Activated CD4-positive, alpha-beta T cell treated with anti-CD3 and anti-CD28 coated beads, Interleukin-2, amount 10 ng/mL, durations not matched to agents 24 days and 14 days (primary cell): ENCODE measurements at regions of chr13 and their contacts with region 1.

Region 1: GRCh38 chr13:99356158-99357091 is 49.2 kb upstream of the GPR183 start:
- DNase-seq: peak; percentile 94
- H3K4me3 Mint-ChIP-seq: peak overlapping the region; percentile 83
- H3K27ac Mint-ChIP-seq: peak overlapping the region; percentile 99
- H3K4me1 Mint-ChIP-seq: peaks cover 92% of the 10 kb centered on the region
- H3K27me3 Mint-ChIP-seq: no peaks in the 10 kb centered on the region

Region 2: DNA sequence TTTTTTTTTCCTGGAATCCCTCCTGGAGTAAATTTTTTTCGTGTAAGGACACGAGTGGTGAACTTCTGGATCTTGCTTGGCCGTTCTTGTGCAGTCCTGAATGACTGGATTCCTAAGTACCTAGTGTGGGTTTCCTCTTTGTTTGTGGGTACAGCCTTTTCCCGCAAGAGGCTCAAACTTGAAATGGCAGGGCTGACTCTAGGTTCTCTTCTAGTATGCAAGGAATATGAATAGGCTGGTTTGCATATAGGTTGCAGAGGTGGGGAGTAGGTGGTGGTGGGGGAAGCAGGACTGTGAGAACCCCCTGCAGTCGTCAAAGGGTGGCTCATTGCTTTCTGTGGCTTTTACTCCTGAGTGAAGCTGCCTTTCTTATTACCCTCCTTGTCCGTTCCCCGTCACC is 142.2 kb before region 1 on chr13:
- intact Hi-C with region 1: loop called (anchors 2 kb)
- DNase-seq: peak; percentile 78
- H3K4me3 Mint-ChIP-seq: peak overlapping the region; percentile 83
- H3K27ac Mint-ChIP-seq: peak overlapping the region; percentile 92
- H3K4me1 Mint-ChIP-seq: peaks cover 68% of the 10 kb centered on the region
- H3K27me3 Mint-ChIP-seq: no peaks in the 10 kb centered on the region

Region 3: GRCh38 chr13:99307648-99308339 is 48.6 kb before region 1 on chr13:
- intact Hi-C with region 1: loop called (anchors 1 kb)
- DNase-seq: peak; percentile 87
- H3K4me3 Mint-ChIP-seq: peak overlapping the region; percentile 84
- H3K27ac Mint-ChIP-seq: peak overlapping the region; percentile 88
- H3K4me1 Mint-ChIP-seq: peaks cover 73% of the 10 kb centered on the region
- H3K27me3 Mint-ChIP-seq: no peaks in the 10 kb centered on the region

Region 4: DNA sequence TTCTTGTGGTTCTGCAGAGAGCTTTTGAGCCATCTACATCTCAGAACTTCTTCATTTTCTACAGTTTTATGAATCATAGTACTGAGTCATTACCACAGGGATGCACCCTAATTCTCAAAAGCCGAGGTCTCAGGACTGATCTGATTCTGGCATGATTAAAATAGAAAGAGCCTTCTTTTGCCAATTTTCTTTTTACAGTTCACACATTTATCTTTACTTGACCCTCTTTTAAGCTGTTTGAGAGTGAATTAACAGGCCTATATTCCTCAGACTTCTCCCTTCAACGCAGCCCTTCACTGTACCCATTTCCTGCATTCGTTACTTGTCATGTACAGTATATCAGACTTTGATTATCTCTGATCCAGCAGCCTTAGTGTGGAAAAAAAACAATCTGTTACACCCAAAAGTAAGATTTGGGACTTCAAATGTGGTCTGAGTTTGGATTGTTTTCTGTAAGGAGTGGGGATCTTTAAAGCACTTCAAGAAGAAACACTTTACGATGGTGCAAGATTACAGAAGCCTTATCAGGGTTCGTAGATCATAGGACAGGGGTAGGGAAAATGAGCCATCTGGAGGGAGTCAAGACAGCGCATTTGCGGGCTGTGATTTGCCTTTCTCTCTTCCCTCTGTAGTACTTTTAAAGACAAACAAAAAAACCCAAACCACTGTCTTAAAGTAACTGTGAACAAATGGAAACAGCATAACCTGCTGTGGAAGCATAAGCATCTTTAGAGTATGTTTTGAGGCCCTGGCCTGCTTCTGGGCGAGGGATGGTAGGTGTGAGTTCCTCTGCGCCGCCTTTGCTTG is 33.9 kb before region 1 on chr13:
- intact Hi-C with region 1: loop called (anchors 1 kb)
- DNase-seq: peak; percentile 81
- H3K4me3 Mint-ChIP-seq: peak overlapping the region; percentile 63
- H3K27ac Mint-ChIP-seq: peak overlapping the region; percentile 98
- H3K4me1 Mint-ChIP-seq: peaks cover 59% of the 10 kb centered on the region
- H3K27me3 Mint-ChIP-seq: no peaks in the 10 kb centered on the region

Region 5: DNA sequence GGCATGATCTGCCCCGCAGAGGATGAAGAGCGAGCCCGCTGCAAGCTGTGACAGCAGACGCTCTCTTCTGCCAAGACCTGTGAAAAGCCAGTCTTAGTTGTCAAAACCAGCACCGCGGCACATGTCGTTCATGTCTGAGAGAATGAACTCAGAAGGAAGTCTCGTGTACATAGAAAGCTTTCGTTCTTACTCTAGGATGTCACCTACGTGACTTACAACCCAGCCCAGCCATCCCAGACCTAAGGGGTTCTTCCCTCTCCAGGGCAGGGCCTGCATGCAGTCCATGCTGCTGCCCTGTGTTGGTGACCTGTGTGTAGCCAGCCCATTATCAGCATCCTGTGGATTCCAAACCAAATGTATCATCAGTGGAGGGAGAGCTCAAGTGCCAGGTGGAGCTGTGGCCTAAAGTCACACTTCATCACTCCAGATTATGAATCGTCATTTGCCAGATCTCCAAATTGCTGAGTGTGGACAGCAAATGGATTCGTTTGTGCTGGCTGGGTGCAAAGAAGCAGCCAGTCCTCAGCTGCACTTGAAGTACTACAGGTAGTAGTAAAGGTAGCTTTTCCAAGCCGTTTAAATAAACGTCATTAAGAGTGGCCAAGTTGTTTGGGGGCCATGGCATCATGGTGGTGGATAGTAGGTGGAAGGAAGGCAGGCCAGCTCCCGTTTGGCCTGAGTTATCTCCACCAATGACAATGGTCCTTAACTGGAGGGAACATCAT is 24.7 kb after region 1 on chr13:
- intact Hi-C with region 1: loop called (anchors 1 kb)
- DNase-seq: peak; percentile 88
- H3K4me3 Mint-ChIP-seq: peak overlapping the region; percentile 56
- H3K27ac Mint-ChIP-seq: peak overlapping the region; percentile 88
- H3K4me1 Mint-ChIP-seq: peaks cover 65% of the 10 kb centered on the region
- H3K27me3 Mint-ChIP-seq: no peaks in the 10 kb centered on the region